ENCODE measurements at regions of chr2 and their contacts with region 1.

Region 1: DNA sequence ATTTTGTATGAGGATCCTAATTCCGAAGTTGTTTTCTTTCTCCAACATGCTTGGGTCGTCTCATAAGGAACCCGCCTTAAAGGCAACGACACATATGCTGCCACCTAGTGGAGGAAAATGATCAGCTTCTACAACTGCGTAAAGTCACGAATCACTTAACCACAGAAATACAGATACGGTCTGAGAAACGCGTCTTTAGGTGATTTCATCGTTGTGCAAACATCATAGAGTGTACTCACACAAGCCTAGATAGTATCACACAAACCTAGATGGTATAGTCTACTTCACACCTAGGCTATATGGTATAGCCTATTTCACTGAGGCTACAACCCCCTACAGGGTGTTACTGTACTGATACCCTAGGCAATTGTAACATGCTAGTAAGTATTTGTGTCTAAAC is 13.1 kb downstream of the GNLY start:
- DNase-seq: peak; percentile 65
- H3K4me3 Mint-ChIP-seq: no peak overlapping the region
- H3K27ac Mint-ChIP-seq: no peak overlapping the region
- H3K4me1 Mint-ChIP-seq: peaks cover 28% of the 10 kb centered on the region
- H3K27me3 Mint-ChIP-seq: peaks cover 4% of the 10 kb centered on the region

Region 2: GRCh38 chr2:85420536-85421259 is 286.6 kb before region 1 on chr2:
- CTCF ChIA-PET with region 1: no interaction called
- POLR2A ChIA-PET with region 1: no interaction called
- intact Hi-C with region 1: loop called (anchors 2 kb)
- DNase-seq: peak; percentile 95
- H3K4me3 Mint-ChIP-seq: peak overlapping the region; percentile 53
- H3K27ac Mint-ChIP-seq: peak overlapping the region; percentile 64
- H3K4me1 Mint-ChIP-seq: peaks cover 18% of the 10 kb centered on the region
- H3K27me3 Mint-ChIP-seq: no peaks in the 10 kb centered on the region

Region 3: DNA sequence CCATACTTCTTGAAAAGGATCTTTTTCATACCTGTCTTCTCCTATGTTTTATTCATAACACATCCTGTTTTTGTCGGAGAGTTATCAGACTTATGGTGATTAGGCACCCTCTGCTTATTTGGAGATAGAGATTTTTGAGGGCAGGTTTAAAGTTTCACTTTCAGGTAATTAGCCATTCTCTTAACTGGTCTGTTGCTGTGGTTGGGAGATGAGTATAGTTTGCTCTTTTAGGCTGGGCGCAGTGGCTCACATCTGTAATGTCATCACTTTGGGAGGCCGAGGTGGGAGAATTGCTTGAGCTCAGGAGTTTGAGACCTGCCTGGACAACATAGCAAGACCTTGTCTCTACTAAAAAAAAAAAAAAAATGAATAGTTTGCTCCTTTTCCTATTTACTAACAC is 64.6 kb before region 1 on chr2:
- CTCF ChIA-PET with region 1: interaction called, 50 read pairs
- POLR2A ChIA-PET with region 1: no interaction called
- intact Hi-C with region 1: loop called (anchors 1 kb)
- DNase-seq: peak; percentile 36
- H3K4me3 Mint-ChIP-seq: no peak overlapping the region
- H3K27ac Mint-ChIP-seq: peak overlapping the region; percentile 69
- H3K4me1 Mint-ChIP-seq: peaks cover 13% of the 10 kb centered on the region
- H3K27me3 Mint-ChIP-seq: no peaks in the 10 kb centered on the region

Region 4: DNA sequence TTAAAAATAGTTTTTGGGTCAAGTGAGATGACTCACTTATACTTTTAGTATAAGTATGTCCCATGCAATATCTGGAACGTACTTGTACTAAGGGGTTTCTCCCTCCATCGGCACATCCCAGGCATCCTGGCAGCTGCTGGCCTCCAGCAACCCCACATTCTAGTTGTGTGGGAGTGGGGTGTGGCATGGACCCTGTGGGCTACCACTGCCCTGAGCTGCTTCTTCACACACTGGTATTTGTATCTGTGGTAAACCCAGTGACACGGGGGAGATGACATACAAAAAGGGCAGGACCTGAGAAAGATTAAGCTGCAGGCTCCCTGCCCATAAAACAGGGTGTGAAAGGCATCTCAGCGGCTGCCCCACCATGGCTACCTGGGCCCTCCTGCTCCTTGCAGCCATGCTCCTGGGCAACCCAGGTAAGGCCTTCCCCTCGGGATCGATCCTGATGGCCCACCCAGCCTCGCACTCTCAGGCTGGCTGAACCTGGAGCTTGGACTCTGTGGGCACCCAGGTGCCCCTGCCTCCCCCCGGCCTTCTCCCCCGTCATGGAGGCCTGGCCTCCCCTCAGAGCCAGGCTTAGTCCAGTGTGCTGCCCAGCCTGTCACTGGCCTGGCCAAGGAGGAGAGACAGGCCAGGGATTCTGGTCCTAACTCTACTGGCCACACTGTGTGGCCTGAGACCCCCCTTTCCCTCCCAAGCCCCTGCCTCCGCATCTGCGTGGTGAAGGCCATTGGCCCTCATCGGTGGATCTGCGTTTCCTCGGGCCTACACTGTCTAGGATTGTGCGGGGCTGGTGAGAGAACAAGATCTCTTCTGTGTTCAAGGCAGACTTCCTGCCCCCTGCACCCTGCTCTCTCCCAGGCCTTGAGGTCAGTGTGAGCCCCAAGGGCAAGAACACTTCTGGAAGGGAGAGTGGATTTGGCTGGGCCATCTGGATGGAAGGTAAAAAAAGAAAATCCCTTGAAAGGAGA is 13.0 kb before region 1 on chr2 and contains the start of gene GNLY:
- CTCF ChIA-PET with region 1: interaction called, 34 read pairs
- POLR2A ChIA-PET with region 1: interaction called, 3 read pairs
- intact Hi-C with region 1: loop called (anchors 2 kb)
- DNase-seq: no peak
- H3K4me3 Mint-ChIP-seq: no peak within 1 kb of the TSS
- H3K27ac Mint-ChIP-seq: no peak within 1 kb of the TSS
- H3K4me1 Mint-ChIP-seq: no peaks in the 10 kb centered on the region
- H3K27me3 Mint-ChIP-seq: no peaks in the 10 kb centered on the region
- total RNA-seq, gene GNLY: 21.5 to 22.8 TPM

Region 5: GRCh38 chr2:85728883-85729824 is 21.9 kb after region 1 on chr2:
- CTCF ChIA-PET with region 1: interaction called, 19 read pairs
- POLR2A ChIA-PET with region 1: no interaction called
- intact Hi-C with region 1: no loop called
- DNase-seq: peak; percentile 80
- H3K4me3 Mint-ChIP-seq: no peak overlapping the region
- H3K27ac Mint-ChIP-seq: no peak overlapping the region
- H3K4me1 Mint-ChIP-seq: no peaks in the 10 kb centered on the region
- H3K27me3 Mint-ChIP-seq: peaks cover 3% of the 10 kb centered on the region

Region 6: GRCh38 chr2:86433137-86433536 is 725.8 kb after region 1 on chr2:
- CTCF ChIA-PET with region 1: no interaction called
- POLR2A ChIA-PET with region 1: no interaction called
- intact Hi-C with region 1: no loop called
- DNase-seq: no peak
- H3K4me3 Mint-ChIP-seq: no peak overlapping the region
- H3K27ac Mint-ChIP-seq: no peak overlapping the region
- H3K4me1 Mint-ChIP-seq: no peaks in the 10 kb centered on the region
- H3K27me3 Mint-ChIP-seq: no peaks in the 10 kb centered on the region